CD4-positive, alpha-beta memory T cell (primary cell): ENCODE measurements at regions of chr16 and their contacts with region 1.

Region 1: DNA sequence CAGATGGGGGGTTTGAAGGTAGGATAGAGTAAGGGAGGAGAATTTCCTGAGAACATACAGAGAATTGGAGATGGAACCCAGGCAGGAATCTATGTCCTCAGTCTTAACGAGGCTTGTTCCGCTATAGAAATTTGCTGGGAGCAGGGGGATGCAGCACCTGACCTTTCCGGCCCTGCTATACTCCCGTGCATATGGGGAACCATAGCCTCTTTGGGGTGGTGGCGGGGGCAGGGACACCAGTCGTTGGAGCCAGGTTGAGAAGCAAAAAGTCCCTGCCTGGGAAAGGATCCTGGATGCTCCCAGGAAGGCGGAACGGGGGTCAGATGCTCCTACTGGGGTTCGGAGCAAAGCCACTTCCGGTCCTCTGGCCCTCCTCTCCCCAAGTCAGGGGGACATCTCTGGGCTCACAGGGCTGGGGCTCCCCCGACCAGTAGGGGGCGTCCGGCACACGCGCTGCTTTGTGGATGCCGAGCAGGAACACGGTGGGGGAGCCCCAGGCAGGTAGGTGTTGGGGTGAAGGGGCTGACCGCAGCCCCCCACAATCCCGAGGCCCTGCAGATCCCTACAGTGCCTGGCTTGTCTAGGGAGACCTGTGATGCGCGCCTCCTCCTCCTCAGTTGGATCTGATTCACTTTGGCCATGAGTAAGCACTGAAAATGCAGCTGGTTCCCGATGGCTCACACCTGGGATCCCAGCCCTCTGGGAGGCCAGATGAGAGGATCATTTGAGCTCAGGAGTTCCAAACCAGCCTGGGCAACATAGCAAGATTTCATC is 15.5 kb upstream of the TFAP4 start:
- DNase-seq: peak; percentile 74 to 79 (median 77)
- H3K4me3 ChIP-seq: no peak overlapping the region
- H3K4me3 Mint-ChIP-seq: peak overlapping the region in 1 of 8 donors; percentile 43
- H3K27ac ChIP-seq: no peak overlapping the region
- H3K27ac Mint-ChIP-seq: peak overlapping the region in 2 of 7 donors; percentile 55 to 57
- H3K4me1 ChIP-seq: peaks cover 7% of the 10 kb centered on the region
- H3K4me1 Mint-ChIP-seq: peaks cover 2 to 18% (median 7%) of the 10 kb centered on the region in 4 donors
- H3K27me3 ChIP-seq: no peaks in the 10 kb centered on the region
- H3K27me3 Mint-ChIP-seq: peaks cover 10 to 18% of the 10 kb centered on the region in 2 donors

Region 2: DNA sequence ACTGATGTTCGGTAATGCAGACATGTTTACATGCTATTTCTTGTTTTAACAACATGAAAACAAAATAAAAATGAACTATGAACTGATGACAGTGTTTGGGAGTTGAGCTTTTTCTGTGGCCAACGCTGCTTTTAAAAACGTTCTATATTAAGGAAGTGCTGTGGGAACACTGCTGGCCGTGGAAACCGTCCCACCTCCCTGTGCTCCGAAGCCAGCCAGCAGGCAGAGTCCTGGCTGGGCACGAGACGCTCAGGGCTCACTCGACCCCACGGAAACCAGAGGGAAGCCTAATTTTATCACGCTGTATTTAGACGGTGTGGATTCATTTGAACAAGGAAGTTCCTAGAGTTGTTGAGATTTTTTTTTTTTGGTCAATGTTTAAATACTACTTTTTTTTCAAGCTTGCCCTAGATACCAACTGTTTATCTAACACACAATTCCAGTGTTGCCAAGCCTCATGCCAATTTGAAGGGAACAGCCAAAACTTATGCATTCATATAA is 197.9 kb before region 1 on chr16:
- CTCF ChIA-PET with region 1: no interaction called
- POLR2A ChIA-PET with region 1: no interaction called
- intact Hi-C with region 1: no loop called
- DNase-seq: no peak
- H3K4me3 ChIP-seq: no peak overlapping the region
- H3K4me3 Mint-ChIP-seq: no peak overlapping the region
- H3K27ac ChIP-seq: no peak overlapping the region
- H3K27ac Mint-ChIP-seq: no peak overlapping the region
- H3K4me1 ChIP-seq: no peaks in the 10 kb centered on the region
- H3K4me1 Mint-ChIP-seq: peaks cover 3 to 12% (median 5%) of the 10 kb centered on the region in 4 donors
- H3K27me3 ChIP-seq: no peaks in the 10 kb centered on the region
- H3K27me3 Mint-ChIP-seq: no peaks in the 10 kb centered on the region

Region 3: GRCh38 chr16:4298761-4299522 is 10.6 kb after region 1 on chr16:
- CTCF ChIA-PET with region 1: interaction called, 14 read pairs
- POLR2A ChIA-PET with region 1: no interaction called
- intact Hi-C with region 1: no loop called
- DNase-seq: no peak
- H3K4me3 ChIP-seq: no peak overlapping the region
- H3K4me3 Mint-ChIP-seq: no peak overlapping the region
- H3K27ac ChIP-seq: no peak overlapping the region
- H3K27ac Mint-ChIP-seq: peak overlapping the region in 3 of 7 donors; percentile 66 to 73 (median 70)
- H3K4me1 ChIP-seq: no peaks in the 10 kb centered on the region
- H3K4me1 Mint-ChIP-seq: peaks cover 0 to 4% (median 2%) of the 10 kb centered on the region in 4 donors
- H3K27me3 ChIP-seq: no peaks in the 10 kb centered on the region
- H3K27me3 Mint-ChIP-seq: no peaks in the 10 kb centered on the region

Region 4: DNA sequence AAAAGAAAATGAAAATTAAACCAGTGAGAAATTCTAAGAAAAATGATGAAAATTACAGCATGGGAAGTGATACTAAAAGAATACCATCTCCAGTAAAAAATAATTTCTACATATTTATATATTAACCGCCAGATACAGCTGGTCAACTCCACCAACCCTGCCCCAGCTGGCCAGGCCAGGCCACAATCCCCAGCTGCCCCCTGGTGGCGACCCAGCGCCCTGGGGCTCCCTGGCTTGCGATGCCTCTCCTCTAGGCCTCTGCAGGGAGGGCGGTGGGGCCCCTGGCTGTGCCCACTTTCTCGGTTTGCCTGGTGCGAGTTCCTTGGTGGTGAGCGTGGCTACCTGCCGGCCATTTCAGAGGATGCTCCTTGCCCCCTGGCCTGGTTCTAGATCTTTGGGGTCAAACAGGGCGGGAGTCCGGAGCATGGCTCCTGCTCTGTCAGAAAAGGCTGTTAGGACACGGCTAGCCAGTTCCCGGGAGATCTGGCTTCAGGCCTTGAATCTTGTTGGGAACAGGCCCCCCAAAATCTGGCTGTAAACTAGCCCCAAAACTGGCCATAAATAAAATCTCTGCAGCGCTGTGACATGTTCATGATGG is 42.0 kb after region 1 on chr16:
- CTCF ChIA-PET with region 1: interaction called, 161 read pairs
- POLR2A ChIA-PET with region 1: interaction called, 3 read pairs
- intact Hi-C with region 1: loop called (anchors 1 kb)
- DNase-seq: peak; percentile 59 to 71 (median 61)
- H3K4me3 ChIP-seq: no peak overlapping the region
- H3K4me3 Mint-ChIP-seq: no peak overlapping the region
- H3K27ac ChIP-seq: no peak overlapping the region
- H3K27ac Mint-ChIP-seq: peak overlapping the region in 1 of 7 donors; percentile 50
- H3K4me1 ChIP-seq: peaks cover 9% of the 10 kb centered on the region
- H3K4me1 Mint-ChIP-seq: peaks cover 0 to 5% (median 1%) of the 10 kb centered on the region in 4 donors
- H3K27me3 ChIP-seq: no peaks in the 10 kb centered on the region
- H3K27me3 Mint-ChIP-seq: no peaks in the 10 kb centered on the region

Region 5: DNA sequence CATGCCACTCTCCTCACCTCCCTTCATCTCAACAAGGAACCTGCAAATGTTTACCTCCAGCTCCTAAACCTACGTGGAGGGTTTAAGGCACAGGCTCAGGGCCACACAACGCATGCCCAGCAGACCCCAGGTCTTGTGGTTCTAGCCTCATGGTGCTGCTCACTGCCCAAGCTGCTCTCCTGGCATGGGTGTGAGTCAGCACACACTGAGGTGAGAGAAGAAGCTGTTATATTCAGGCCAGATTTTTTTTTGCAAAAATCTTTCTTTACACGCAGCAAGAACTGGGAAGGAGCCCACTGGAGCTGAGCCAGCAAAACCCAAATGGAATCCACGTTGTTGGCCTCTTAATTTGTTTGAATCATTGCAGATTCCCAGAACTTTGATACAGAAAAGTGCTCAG is 262.3 kb after region 1 on chr16:
- CTCF ChIA-PET with region 1: no interaction called
- POLR2A ChIA-PET with region 1: no interaction called
- intact Hi-C with region 1: loop called (anchors 1 kb)
- DNase-seq: no peak
- H3K4me3 ChIP-seq: no peak overlapping the region
- H3K4me3 Mint-ChIP-seq: no peak overlapping the region
- H3K27ac ChIP-seq: no peak overlapping the region
- H3K27ac Mint-ChIP-seq: peak overlapping the region in 2 of 7 donors; percentile 46 to 88
- H3K4me1 ChIP-seq: peaks cover 6% of the 10 kb centered on the region
- H3K4me1 Mint-ChIP-seq: peaks cover 4 to 7% (median 5%) of the 10 kb centered on the region in 4 donors
- H3K27me3 ChIP-seq: no peaks in the 10 kb centered on the region
- H3K27me3 Mint-ChIP-seq: no peaks in the 10 kb centered on the region

Region 6: DNA sequence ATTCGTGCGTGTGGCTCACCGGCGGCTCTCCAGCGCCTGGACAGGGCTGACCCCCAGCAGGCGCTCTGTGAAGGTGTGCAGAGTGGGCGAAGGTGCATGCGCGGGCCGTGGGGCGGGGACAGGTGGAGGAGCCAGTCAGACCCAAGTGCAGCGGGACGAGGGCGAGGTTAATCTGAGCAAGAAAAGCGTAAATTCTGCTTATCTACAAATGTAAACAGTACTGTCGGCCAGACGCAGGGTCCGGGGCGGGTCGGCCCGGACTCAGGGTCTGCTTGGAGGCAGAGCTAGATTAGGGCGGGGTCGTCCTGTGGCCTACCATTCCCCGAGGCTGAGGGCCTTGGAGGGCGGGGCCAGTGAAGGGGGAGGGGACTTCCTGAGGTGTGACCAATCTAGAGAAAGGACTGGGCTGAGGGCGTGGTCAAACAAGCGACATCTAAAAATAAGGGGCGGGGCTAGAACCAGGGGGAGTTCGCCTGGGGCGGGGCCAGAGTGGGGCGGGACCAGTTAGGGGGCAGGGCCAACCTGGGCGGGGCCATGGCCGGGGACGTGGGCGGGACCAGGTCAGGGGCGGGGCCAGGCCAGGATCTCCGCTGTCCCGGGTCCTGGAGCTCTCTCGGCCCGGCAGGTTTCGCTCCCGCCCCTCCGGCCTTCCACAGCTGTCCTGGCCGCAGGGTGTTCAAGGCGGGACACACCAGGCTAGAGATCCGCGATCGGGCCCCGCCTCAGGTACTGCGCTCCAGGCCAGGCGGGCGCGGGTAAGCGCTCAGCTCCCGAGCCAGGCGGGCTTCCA is 669.6 kb after region 1 on chr16 and contains the start of gene SEC14L5:
- CTCF ChIA-PET with region 1: no interaction called
- POLR2A ChIA-PET with region 1: no interaction called
- intact Hi-C with region 1: loop called (anchors 1 kb)
- DNase-seq: peak; percentile 86 to 96 (median 89)
- H3K4me3 ChIP-seq: peak within 1 kb of the TSS; percentile 23 to 45
- H3K4me3 Mint-ChIP-seq: peak within 1 kb of the TSS; percentile 78 to 92 (median 86)
- H3K27ac ChIP-seq: no peak within 1 kb of the TSS
- H3K27ac Mint-ChIP-seq: peak within 1 kb of the TSS; percentile 1 to 77 (median 57)
- H3K4me1 ChIP-seq: peaks cover 16% of the 10 kb centered on the region
- H3K4me1 Mint-ChIP-seq: peaks cover 12 to 28% (median 20%) of the 10 kb centered on the region in 4 donors
- H3K27me3 ChIP-seq: peaks cover 11% of the 10 kb centered on the region
- H3K27me3 Mint-ChIP-seq: peaks cover 21 to 30% of the 10 kb centered on the region in 2 donors
- total RNA-seq, gene SEC14L5: not detected